WTC11 (cell line): ENCODE measurements at regions of chr11 and their contacts with region 1.

Region 1: DNA sequence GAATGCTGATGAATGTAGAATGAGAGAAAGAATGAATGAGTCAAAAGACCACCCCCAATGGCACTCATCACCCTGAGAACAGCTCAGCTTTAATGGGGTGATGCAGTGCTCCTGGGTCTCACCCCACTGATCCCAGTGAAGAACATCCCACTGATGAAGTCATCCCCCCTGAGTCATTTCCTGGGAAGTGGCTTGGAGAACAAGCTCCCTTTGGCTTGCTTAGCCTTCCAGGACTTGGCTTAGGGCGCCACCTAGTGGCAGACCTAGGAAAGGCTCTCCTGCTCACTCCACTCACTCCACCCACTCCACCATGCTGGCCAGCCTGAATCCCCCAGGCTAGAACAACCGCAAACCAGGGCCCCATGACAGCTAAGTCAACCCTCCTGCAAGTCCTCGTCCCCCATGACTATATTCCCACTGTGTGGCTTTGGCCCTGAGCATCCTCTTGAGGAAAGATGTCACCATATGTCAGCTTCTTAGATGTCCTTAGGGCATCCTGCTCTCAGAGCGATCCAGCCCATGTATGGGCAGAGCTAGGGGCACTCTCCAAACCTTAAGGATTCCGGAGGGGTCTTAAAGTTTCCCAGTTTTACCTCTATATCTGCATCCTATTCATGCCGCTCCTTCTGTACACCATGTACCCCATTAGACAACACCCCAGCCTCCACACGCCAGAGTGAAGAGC is 17.8 kb upstream of the TMPRSS13 start:
- DNase-seq: peak; percentile 94
- ATAC-seq: peak; percentile 97
- H3K4me3 Mint-ChIP-seq: no peak overlapping the region
- H3K27ac Mint-ChIP-seq: 0 out of 2 replicates have a peak overlapping the region, but pooled peaks have one; percentile 28
- H3K4me1 Mint-ChIP-seq: no peaks in the 10 kb centered on the region
- H3K27me3 Mint-ChIP-seq: no peaks in the 10 kb centered on the region
- CTCF ChIP-seq: peak; percentile 96

Region 2: GRCh38 chr11:117817368-117818040 is 129.5 kb before region 1 on chr11:
- CTCF ChIA-PET with region 1: interaction called, 336 read pairs
- POLR2A ChIA-PET with region 1: no interaction called
- DNase-seq: peak; percentile 89
- ATAC-seq: peak; percentile 33
- H3K4me3 Mint-ChIP-seq: peak overlapping the region; percentile 48
- H3K27ac Mint-ChIP-seq: no peak overlapping the region
- H3K4me1 Mint-ChIP-seq: peaks cover 56% of the 10 kb centered on the region
- H3K27me3 Mint-ChIP-seq: peaks cover 5% of the 10 kb centered on the region; the same call in 1 of the 2 replicates
- CTCF ChIP-seq: peak; percentile 99

Region 3: DNA sequence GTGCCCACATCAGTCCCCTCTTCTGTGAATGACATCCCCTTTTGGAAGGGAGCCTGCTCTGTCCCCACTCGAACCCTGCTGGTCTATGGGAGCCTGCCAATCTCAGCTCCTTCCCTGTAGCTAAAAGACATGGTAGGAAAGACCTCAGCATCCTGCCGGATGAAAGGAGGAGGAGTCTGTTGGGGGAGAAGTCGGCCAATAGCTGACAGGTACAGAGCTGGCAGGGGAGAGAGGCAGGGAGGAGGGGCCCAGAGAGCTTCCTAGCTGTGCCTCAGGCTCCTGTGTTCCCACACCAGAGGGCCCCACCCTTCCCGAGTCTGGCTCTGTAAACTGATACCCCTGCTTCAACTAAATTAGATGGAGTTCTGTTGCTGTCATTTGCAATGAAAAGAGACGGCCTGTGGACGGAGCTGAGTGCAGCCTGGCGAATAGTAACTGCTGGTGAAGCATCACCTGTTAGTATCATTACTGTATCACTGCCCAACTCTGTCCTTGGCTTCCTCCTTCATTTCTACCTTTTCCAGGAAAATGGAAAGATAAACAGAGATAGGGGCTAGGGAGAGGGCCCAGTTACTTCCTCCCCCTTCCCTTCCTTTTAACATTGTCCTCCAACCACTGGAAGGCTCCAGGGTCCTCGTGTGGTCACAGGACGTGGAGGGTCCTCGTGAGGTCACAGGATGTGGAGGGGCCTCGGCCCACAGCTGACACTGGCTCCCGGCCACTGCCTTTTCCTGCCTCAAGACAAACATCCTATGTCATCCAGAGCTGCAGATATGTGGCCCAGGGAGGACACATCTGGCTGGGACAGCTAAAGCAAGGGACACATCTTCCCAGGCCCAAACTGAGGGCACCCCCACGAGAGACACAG is 85.6 kb before region 1 on chr11:
- CTCF ChIA-PET with region 1: interaction called, 35 read pairs
- POLR2A ChIA-PET with region 1: no interaction called
- DNase-seq: peak; percentile 89
- ATAC-seq: peak; percentile 100
- H3K4me3 Mint-ChIP-seq: no peak overlapping the region
- H3K27ac Mint-ChIP-seq: peak overlapping the region; percentile 43
- H3K4me1 Mint-ChIP-seq: peaks cover 25% of the 10 kb centered on the region
- H3K27me3 Mint-ChIP-seq: peaks cover 7% of the 10 kb centered on the region
- CTCF ChIP-seq: no peak

Region 4: DNA sequence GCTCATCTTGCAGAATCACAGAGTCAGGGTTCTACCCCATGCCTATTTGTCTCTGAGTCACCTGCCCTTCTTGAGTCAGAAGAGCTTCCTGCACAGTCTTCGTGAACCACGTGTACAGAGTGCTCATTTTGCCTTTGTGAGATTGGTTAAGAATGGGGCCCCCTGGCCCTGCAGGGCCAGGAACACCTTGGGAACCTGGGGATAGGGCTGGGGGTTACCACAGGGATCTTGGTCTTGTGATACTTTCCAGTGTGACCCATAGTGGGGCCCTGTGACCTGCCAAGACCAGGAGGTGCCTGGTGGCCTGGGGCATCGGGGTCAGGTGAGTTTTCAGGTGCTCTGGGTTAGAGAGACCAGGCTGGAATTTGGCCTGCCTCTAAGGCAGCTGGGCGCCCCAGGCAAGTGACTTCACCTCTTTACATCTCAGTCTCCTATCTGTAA is 27.2 kb before region 1 on chr11:
- CTCF ChIA-PET with region 1: interaction called, 24 read pairs
- POLR2A ChIA-PET with region 1: no interaction called
- DNase-seq: no peak
- ATAC-seq: no peak
- H3K4me3 Mint-ChIP-seq: no peak overlapping the region
- H3K27ac Mint-ChIP-seq: no peak overlapping the region
- H3K4me1 Mint-ChIP-seq: peaks cover 4% of the 10 kb centered on the region
- H3K27me3 Mint-ChIP-seq: no peaks in the 10 kb centered on the region
- CTCF ChIP-seq: no peak

Region 5: DNA sequence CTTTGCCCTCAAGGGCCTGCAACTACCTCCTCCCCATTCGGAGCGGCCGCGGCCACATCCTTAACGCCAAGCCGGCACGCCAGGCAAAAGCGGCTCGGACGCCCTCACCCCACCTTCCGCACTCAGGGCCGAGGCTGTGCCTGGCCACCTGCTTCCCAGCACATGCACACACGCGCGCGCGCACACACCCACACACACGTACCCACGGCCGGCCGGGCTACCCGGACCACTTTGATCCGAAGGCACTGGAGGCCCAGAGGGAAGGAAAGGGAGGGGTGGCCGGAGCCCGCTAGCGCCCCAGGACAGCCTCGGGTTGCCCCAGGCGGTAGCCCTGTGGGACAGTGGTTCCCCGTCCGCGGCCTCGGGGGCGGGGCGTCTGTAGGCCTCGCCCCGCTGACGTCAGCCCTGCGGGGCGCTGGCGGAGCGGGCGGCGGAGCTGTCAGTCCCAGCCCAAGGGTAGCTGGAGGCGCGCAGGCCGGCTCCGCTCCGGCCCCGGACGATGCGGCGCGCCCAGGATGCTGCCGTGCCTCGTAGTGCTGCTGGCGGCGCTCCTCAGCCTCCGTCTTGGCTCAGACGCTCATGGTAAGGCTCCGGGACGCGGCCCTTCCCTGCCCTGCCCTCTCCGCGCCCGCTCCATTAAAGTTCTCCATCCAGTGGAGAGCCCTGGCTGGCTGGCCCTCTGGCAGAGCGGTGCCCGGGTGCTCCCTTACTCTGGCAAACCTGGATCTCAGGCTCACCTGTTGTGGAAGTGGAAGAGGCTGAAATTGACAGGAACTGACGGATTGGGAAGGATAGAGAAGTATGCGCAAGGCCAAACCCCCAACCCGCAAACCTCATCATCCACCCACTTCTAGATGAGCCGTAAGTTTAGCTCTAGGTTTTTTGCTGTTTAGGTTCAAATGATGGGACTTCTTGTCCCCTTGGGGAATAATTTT is 39.2 kb after region 1 on chr11 and contains the start of gene IL10RA:
- CTCF ChIA-PET with region 1: interaction called, 10 read pairs
- POLR2A ChIA-PET with region 1: interaction called, 4 read pairs
- DNase-seq: peak; percentile 89
- ATAC-seq: peak; percentile 96
- H3K4me3 Mint-ChIP-seq: peak within 1 kb of the TSS; percentile 84
- H3K27ac Mint-ChIP-seq: no peak within 1 kb of the TSS
- H3K4me1 Mint-ChIP-seq: peaks cover 9% of the 10 kb centered on the region
- H3K27me3 Mint-ChIP-seq: peaks cover 58% of the 10 kb centered on the region
- CTCF ChIP-seq: no peak
- total RNA-seq, gene IL10RA: 0.41 to 0.74 TPM (median 0.71 TPM) in 3 replicates

Region 6: GRCh38 chr11:118171269-118172062 is 224.5 kb after region 1 on chr11:
- CTCF ChIA-PET with region 1: interaction called, 10 read pairs
- POLR2A ChIA-PET with region 1: no interaction called
- DNase-seq: peak; percentile 89
- ATAC-seq: peak; percentile 79
- H3K4me3 Mint-ChIP-seq: peak overlapping the region; percentile 64
- H3K27ac Mint-ChIP-seq: no peak overlapping the region
- H3K4me1 Mint-ChIP-seq: peaks cover 43% of the 10 kb centered on the region
- H3K27me3 Mint-ChIP-seq: peaks cover 90% of the 10 kb centered on the region
- CTCF ChIP-seq: peak; percentile 92